Activated B cell treated with CpG ODN at 0.5 μM for 24 hours (primary cell): ENCODE measurements at regions of chr13 and their contacts with region 1.

Region 1: DNA sequence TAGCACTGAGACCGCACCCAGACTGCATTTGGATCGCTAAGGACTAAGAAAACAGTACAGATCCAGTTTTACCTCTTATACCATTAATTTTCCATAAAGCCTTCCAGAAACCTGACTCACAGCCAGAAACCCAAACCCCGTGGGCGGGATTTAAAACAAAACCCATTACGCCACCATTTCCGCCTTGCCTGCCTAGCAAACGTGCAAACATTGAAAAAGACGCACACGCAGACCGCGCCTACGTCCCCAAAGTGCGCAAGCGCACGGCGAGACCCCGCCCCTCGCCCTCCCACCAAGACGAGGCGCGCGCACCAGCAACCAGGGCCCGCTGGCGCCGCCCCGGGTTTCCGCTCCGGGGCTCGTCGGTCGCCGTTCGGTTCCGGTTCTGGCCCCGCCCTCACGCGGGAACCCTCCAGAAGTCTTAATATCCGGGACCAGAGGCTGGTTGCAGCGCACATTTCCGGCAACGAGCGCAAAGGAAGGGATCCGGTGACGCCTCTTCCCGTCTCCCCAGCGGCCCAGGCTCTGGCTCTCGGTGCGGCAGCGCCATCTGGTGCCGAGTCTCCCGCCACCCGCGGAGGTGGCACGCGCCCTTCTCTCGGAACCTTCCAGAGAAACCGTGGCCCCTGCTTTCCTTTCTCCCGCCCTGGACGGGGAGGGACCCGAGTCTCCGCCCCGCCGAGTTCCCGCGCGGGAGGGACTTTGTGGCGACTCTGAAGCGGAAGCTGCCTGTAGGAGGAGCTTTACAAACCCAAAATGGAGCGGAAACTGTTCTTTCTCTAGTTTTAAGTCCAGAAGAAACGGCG is 256.9 kb upstream of the STARD13 start:
- DNase-seq: peak; percentile 98
- ATAC-seq: peak; percentile 83
- H3K4me3 Mint-ChIP-seq: peak overlapping the region; percentile 96
- H3K27ac Mint-ChIP-seq: peak overlapping the region; percentile 100
- H3K4me1 Mint-ChIP-seq: peaks cover 50% of the 10 kb centered on the region
- H3K27me3 Mint-ChIP-seq: no peaks in the 10 kb centered on the region
- CTCF ChIP-seq: no peak

Region 2: DNA sequence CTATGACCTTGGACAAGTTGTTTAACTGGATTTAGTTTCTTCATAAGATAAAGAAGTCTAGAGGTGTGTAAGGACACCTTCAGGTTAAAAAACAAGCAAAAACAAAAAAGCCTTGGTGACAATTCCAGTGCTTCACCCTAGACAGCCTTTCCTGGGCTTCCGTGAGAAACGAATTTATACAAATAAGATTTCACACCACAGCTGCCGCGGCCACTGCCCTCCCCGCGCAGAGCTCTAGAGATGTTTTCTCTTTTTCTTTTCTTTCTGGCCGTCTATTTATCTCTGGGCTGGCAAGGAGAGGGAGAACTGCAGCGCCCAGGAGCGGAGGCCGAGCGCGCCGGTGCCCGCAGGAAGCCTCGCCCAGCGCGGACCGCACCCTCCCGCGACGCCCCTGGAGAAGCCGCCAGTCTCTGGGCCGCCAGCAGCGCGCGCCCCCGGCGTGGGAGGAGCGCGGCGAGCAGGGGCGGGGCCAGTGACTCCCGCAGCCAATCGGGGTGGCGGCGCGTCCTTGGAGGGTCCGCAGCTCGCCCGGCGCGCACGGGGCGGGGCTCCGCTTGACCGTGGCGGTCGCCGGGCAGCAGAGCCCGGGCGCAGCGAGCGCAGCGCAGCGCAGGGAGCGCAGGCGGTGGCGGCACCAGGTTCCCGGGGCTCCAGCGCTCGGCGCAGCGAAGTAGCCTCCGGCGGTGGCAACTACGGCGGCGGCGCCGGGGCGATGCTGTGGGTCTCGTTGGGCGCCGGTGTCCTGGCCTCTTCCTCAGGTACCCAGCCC is 1696.1 kb before region 1 on chr13:
- CTCF ChIA-PET with region 1: no interaction called
- POLR2A ChIA-PET with region 1: no interaction called
- intact Hi-C with region 1: loop called (anchors 5 kb)
- DNase-seq: peak; percentile 80
- ATAC-seq: peak; percentile 98
- H3K4me3 Mint-ChIP-seq: peak overlapping the region; percentile 83
- H3K27ac Mint-ChIP-seq: no peak overlapping the region
- H3K4me1 Mint-ChIP-seq: peaks cover 9% of the 10 kb centered on the region
- H3K27me3 Mint-ChIP-seq: peaks cover 27% of the 10 kb centered on the region
- CTCF ChIP-seq: no peak

Region 3: DNA sequence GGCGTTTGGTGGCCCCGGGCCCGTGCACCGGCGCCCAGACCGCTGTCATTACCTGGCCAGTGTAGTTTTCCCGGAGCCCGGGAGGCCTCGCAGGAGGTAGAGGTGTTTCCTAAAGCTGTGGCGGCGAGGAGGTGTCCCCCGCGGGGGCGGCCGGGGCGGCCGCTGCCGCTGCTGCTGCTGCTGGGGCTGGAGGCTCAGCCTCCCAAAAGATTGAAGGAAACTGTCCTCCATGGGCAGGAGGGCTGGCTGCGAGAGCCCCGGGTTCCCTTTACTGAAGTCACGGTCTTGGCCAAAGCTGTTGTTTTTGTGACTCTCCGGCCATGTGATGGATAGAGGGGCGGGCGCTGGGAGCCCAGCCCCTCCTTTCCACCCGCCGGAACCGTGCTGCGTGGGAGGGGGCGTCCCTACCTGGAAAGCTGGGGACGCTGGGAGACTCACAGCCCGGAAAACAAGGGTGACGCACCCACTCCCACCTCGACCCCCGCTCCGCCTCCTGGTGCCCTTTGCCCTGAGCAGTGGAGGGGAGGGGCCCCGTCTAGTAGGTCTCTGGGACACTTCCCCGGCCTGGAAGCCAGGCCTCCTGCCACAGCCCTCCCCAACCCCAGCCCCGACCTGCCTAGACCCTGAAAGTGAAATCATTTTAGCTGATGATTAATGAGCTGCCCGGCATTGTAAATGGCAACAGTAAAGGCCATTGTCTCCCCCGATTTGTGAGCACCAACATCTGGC is 1114.5 kb before region 1 on chr13 and contains the start of gene N4BP2L1:
- CTCF ChIA-PET with region 1: no interaction called
- POLR2A ChIA-PET with region 1: interaction called, 5 read pairs
- intact Hi-C with region 1: loop called (anchors 1 kb)
- DNase-seq: peak; percentile 77
- ATAC-seq: peak; percentile 73
- H3K4me3 Mint-ChIP-seq: peak within 1 kb of the TSS; percentile 95
- H3K27ac Mint-ChIP-seq: peak within 1 kb of the TSS; percentile 99
- H3K4me1 Mint-ChIP-seq: peaks cover 48% of the 10 kb centered on the region
- H3K27me3 Mint-ChIP-seq: no peaks in the 10 kb centered on the region
- CTCF ChIP-seq: no peak
- total RNA-seq, gene N4BP2L1: 23.0 and 24.3 TPM in 2 replicates

Region 4: GRCh38 chr13:32650705-32651311 is 891.7 kb before region 1 on chr13:
- CTCF ChIA-PET with region 1: no interaction called
- POLR2A ChIA-PET with region 1: no interaction called
- intact Hi-C with region 1: loop called (anchors 5 kb)
- DNase-seq: no peak
- ATAC-seq: peak; percentile 85
- H3K4me3 Mint-ChIP-seq: no peak overlapping the region
- H3K27ac Mint-ChIP-seq: no peak overlapping the region
- H3K4me1 Mint-ChIP-seq: peaks cover 54% of the 10 kb centered on the region
- H3K27me3 Mint-ChIP-seq: no peaks in the 10 kb centered on the region
- CTCF ChIP-seq: peak; percentile 78

Region 5: DNA sequence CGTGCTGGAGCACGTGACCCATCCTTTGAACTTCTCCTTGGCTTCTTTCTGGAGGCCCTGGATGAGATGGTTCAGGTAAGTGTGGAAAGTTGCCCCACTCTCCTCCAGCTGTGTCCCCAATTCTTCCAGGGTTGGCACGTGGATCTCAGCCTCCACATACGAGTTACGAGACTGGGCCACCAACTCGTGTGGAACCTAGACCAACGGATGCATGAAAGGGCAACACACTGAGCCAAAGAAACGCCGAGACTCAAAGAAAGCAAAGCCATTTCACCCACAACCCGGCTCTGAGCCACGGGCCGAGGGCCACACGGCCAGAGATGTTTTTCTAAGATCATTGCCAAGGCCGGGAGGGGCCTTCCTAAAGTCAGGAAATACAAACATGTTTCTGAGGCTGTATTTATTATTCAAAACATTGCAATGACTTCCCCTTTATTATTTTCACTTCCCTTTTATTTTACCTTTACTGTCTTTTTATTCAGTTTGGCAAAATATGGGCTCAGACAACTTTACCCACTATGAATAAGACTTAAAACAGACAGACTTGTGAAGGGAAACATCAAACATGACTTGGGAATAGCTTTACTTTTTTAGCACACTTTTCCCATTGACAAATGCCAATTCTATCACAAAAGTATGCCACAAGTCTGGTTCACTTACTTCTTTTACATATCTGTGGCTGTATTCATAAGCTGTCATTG is 431.6 kb before region 1 on chr13:
- CTCF ChIA-PET with region 1: no interaction called
- POLR2A ChIA-PET with region 1: interaction called, 4 read pairs
- intact Hi-C with region 1: loop called (anchors 1 kb)
- DNase-seq: no peak
- ATAC-seq: peak; percentile 63
- H3K4me3 Mint-ChIP-seq: peak overlapping the region; percentile 68
- H3K27ac Mint-ChIP-seq: peak overlapping the region; percentile 59
- H3K4me1 Mint-ChIP-seq: peaks cover 58% of the 10 kb centered on the region
- H3K27me3 Mint-ChIP-seq: peaks cover 23% of the 10 kb centered on the region
- CTCF ChIP-seq: no peak

Region 6: GRCh38 chr13:33678906-33679657 is 136.6 kb after region 1 on chr13:
- CTCF ChIA-PET with region 1: no interaction called
- POLR2A ChIA-PET with region 1: interaction called, 12 read pairs
- intact Hi-C with region 1: loop called (anchors 1 kb)
- DNase-seq: peak; percentile 45
- ATAC-seq: peak; percentile 94
- H3K4me3 Mint-ChIP-seq: peak overlapping the region; percentile 74
- H3K27ac Mint-ChIP-seq: peak overlapping the region; percentile 74
- H3K4me1 Mint-ChIP-seq: peaks cover 12% of the 10 kb centered on the region
- H3K27me3 Mint-ChIP-seq: no peaks in the 10 kb centered on the region
- CTCF ChIP-seq: no peak

Region 7: GRCh38 chr13:34941835-34942731 is 1399.6 kb after region 1 on chr13 and contains the start of gene NBEA:
- CTCF ChIA-PET with region 1: no interaction called
- POLR2A ChIA-PET with region 1: no interaction called
- intact Hi-C with region 1: loop called (anchors 5 kb)
- DNase-seq: peak; percentile 82
- ATAC-seq: peak; percentile 81
- H3K4me3 Mint-ChIP-seq: peak within 1 kb of the TSS; percentile 90
- H3K27ac Mint-ChIP-seq: peak within 1 kb of the TSS; percentile 76
- H3K4me1 Mint-ChIP-seq: peaks cover 27% of the 10 kb centered on the region
- H3K27me3 Mint-ChIP-seq: peaks cover 14% of the 10 kb centered on the region
- CTCF ChIP-seq: no peak
- total RNA-seq, gene NBEA: 2.9 and 3.9 TPM in 2 replicates